GM12878 (cell line): ENCODE measurements at regions of chr22 and their contacts with region 1.

Region 1: GRCh38 chr22:25564320-25564978 is at the start of gene GRK3:
- DNase-seq: no peak
- ATAC-seq: peak; percentile 71
- H3K4me3 ChIP-seq: peak within 1 kb of the TSS; percentile 94
- H3K27ac ChIP-seq: peak within 1 kb of the TSS; percentile 77
- H3K4me1 ChIP-seq: peaks cover 25% of the 10 kb centered on the region
- H3K27me3 ChIP-seq: no peaks in the 10 kb centered on the region
- CTCF ChIP-seq: no peak
- EP300 ChIP-seq: no peak
- POLR2A ChIP-seq: peak; percentile 79
- RAD21 ChIP-seq: no peak
- polyA plus RNA-seq, gene GRK3: 4.3 to 4.6 TPM

Region 2: DNA sequence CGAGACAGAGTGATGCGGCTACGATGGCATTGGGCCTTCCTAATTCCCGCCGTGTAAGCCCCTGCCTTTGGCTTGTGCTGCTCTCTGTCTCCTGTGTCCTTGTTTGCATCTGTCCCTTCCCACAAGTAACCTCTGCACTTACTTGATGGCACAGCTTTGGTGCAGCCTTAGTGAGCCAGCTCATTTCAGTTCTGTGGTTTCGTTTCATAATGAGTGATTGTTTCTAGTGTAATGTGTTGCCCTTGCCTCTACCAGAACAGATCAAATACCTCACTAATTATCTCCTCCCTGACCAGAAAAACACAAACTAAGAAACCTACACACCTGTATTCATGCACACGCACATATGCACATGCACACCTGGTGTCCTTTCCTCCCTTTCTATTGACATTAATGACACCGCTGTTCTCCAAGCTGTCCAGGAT is 58.9 kb after region 1 on chr22:
- CTCF ChIA-PET with region 1: interaction called, 8 read pairs
- POLR2A ChIA-PET with region 1: interaction called, 4 read pairs
- RAD21 ChIA-PET with region 1: interaction called, 9 read pairs
- SMC1A ChIA-PET with region 1: interaction called, 61 read pairs
- in situ Hi-C with region 1: no loop called
- intact Hi-C with region 1: no loop called
- DNase-seq: peak; percentile 93
- ATAC-seq: peak; percentile 96
- H3K4me3 ChIP-seq: no peak overlapping the region; the same call in 1 of the 2 replicates
- H3K27ac ChIP-seq: peak overlapping the region; percentile 65
- H3K4me1 ChIP-seq: peaks cover 54% of the 10 kb centered on the region
- H3K27me3 ChIP-seq: no peaks in the 10 kb centered on the region
- CTCF ChIP-seq: no peak
- EP300 ChIP-seq: peak; percentile 80 to 85
- POLR2A ChIP-seq: no peak
- RAD21 ChIP-seq: no peak

Region 3: DNA sequence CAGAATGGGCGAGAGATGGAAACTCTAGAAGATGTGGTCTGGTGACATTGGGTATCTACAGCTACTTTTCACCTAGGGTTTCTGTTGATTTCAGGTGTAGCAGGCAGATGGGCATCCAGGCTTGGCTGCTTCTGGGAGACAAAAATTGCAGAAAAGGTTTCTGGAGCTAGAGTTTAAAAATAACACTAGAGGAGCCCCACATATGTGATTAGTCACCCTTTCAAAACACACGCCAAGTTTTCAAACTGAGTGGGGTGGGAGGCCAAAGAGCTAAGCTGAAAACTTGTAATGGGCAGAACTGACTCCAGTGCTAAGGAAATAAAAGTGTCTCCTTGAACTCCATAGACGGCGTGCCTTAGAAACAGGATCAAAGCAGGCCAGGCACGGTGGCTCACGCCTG is 80.8 kb after region 1 on chr22:
- CTCF ChIA-PET with region 1: interaction called, 4 read pairs
- POLR2A ChIA-PET with region 1: interaction called, 4 read pairs
- RAD21 ChIA-PET with region 1: interaction called, 34 read pairs
- SMC1A ChIA-PET with region 1: interaction called, 8 read pairs
- in situ Hi-C with region 1: no loop called
- intact Hi-C with region 1: no loop called
- DNase-seq: no peak
- ATAC-seq: no peak
- H3K4me3 ChIP-seq: no peak overlapping the region
- H3K27ac ChIP-seq: no peak overlapping the region
- H3K4me1 ChIP-seq: peaks cover 13% of the 10 kb centered on the region; the same call in 1 of the 2 replicates
- H3K27me3 ChIP-seq: no peaks in the 10 kb centered on the region
- CTCF ChIP-seq: no peak
- EP300 ChIP-seq: no peak
- POLR2A ChIP-seq: no peak
- RAD21 ChIP-seq: no peak

Region 4: GRCh38 chr22:25666308-25666707 is 101.9 kb after region 1 on chr22:
- CTCF ChIA-PET with region 1: interaction called, 10 read pairs
- POLR2A ChIA-PET with region 1: no interaction called
- RAD21 ChIA-PET with region 1: interaction called, 5 read pairs
- SMC1A ChIA-PET with region 1: interaction called, 9 read pairs
- in situ Hi-C with region 1: no loop called
- intact Hi-C with region 1: no loop called
- DNase-seq: no peak
- ATAC-seq: no peak
- H3K4me3 ChIP-seq: no peak overlapping the region
- H3K27ac ChIP-seq: no peak overlapping the region
- H3K4me1 ChIP-seq: no peaks in the 10 kb centered on the region
- H3K27me3 ChIP-seq: no peaks in the 10 kb centered on the region
- CTCF ChIP-seq: no peak
- EP300 ChIP-seq: no peak
- POLR2A ChIP-seq: no peak
- RAD21 ChIP-seq: no peak

Region 5: GRCh38 chr22:25772288-25772687 is 207.8 kb after region 1 on chr22:
- CTCF ChIA-PET with region 1: interaction called, 37 read pairs
- POLR2A ChIA-PET with region 1: no interaction called
- RAD21 ChIA-PET with region 1: interaction called, 48 read pairs
- SMC1A ChIA-PET with region 1: interaction called, 19 read pairs
- in situ Hi-C with region 1: loop called (anchors 5 kb)
- intact Hi-C with region 1: no loop called
- DNase-seq: no peak
- ATAC-seq: no peak; the same call in 2 of the 3 replicates
- H3K4me3 ChIP-seq: no peak overlapping the region
- H3K27ac ChIP-seq: no peak overlapping the region
- H3K4me1 ChIP-seq: 0 out of 2 replicates have a peak, but pooled peaks cover 3% of the 10 kb centered on the region
- H3K27me3 ChIP-seq: no peaks in the 10 kb centered on the region
- CTCF ChIP-seq: no peak
- EP300 ChIP-seq: no peak
- POLR2A ChIP-seq: no peak
- RAD21 ChIP-seq: no peak